HepG2 (cell line): ENCODE measurements at regions of chr13 and their contacts with region 1.

Region 1: GRCh38 chr13:75458696-75459422 is 23.1 kb downstream of the TBC1D4 start:
- DNase-seq: peak; percentile 97
- ATAC-seq: peak; percentile 98
- H3K4me3 ChIP-seq: peak overlapping the region; percentile 25 to 49 (median 32); a peak in 5 of 6 replicates
- H3K27ac ChIP-seq: peak overlapping the region; percentile 93
- H3K4me1 ChIP-seq: peaks cover 94% of the 10 kb centered on the region
- H3K27me3 ChIP-seq: no peaks in the 10 kb centered on the region
- CTCF ChIP-seq: no peak
- EP300 ChIP-seq: peak in 1 of 2 experiments; percentile 94; a peak in 2 of 4 replicates
- POLR2A ChIP-seq: peak; percentile 41 to 62; a peak in 3 of 4 replicates
- RAD21 ChIP-seq: peak; percentile 23; the same call in 1 of the 2 replicates

Region 2: GRCh38 chr13:75445717-75446499 is 13.0 kb before region 1 on chr13:
- CTCF ChIA-PET with region 1: no interaction called
- POLR2A ChIA-PET with region 1: interaction called, 22 read pairs
- in situ Hi-C with region 1: no loop called
- intact Hi-C with region 1: loop called (anchors 2 kb)
- DNase-seq: no peak
- ATAC-seq: no peak
- H3K4me3 ChIP-seq: no peak overlapping the region
- H3K27ac ChIP-seq: no peak overlapping the region
- H3K4me1 ChIP-seq: peaks cover 67% of the 10 kb centered on the region
- H3K27me3 ChIP-seq: no peaks in the 10 kb centered on the region
- CTCF ChIP-seq: no peak
- EP300 ChIP-seq: no peak
- POLR2A ChIP-seq: no peak
- RAD21 ChIP-seq: no peak

Region 3: DNA sequence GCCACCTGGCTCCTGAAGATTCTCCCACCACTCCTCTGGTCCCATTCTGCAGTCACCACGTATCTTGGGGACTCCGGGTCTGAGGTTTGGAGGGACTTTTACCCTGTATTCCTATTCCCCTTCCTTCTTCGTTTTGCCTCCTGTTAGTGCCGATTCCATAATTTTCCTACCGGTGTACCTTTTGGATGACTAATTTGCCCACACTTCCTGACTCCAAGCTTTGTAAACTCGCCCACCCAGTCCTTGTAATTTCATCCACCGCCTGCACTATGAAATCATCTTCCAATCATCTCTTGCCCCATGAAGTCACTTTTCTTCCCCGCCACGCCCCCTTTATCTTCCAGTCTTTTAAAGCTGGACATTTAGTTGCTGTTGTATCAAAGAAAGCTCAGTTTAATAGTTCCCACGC is 91.3 kb after region 1 on chr13:
- CTCF ChIA-PET with region 1: no interaction called
- POLR2A ChIA-PET with region 1: no interaction called
- in situ Hi-C with region 1: no loop called
- intact Hi-C with region 1: no loop called
- DNase-seq: peak; percentile 52
- ATAC-seq: peak; percentile 44
- H3K4me3 ChIP-seq: peak overlapping the region; percentile 77 to 99 (median 94)
- H3K27ac ChIP-seq: peak overlapping the region; percentile 88
- H3K4me1 ChIP-seq: peaks cover 39% of the 10 kb centered on the region
- H3K27me3 ChIP-seq: no peaks in the 10 kb centered on the region; a peak in 1 of 5 replicates
- CTCF ChIP-seq: no peak
- EP300 ChIP-seq: no peak
- POLR2A ChIP-seq: no peak
- RAD21 ChIP-seq: no peak